A549 (cell line): ENCODE measurements at regions of chr20 and their contacts with region 1.

Region 1: DNA sequence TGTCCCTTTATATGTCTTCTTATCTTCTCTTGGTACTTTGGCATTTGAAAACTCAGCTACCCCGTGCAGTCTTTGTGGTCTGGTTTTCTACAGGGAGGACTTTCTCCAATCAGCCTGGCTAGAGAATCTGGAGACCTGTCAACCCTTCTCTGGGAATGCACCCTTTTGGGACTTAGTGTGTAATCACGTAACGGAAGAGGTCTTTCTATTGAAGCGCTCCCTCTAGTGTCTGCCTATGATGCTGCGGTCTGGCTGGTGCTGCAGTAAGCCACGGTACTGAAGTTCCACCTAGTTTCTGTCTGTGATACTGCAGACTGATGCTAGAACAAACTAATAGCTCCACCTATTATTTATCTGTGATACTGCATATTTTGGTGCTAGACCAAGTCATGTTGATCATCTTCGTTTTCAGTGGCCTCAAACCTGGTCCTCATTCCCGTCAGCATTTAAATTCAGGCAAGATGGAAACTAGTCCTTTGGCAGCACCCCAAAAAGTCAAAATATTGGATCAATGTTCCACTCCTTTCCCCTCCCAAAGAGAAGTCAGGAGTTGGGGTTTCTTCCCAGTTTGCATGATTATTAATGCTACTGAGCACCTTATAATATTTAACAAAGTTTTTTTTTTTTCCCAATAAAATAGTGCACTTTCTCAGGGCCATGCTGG is 12.5 kb upstream of the SIRPB2 start:
- DNase-seq: peak; percentile 95
- ATAC-seq: peak; percentile 98 to 100
- H3K4me3 ChIP-seq: no peak overlapping the region
- H3K27ac ChIP-seq: no peak overlapping the region
- H3K4me1 ChIP-seq: peaks cover 9% of the 10 kb centered on the region; the same call in 1 of the 3 replicates
- CTCF ChIP-seq: peak; percentile 100
- EP300 ChIP-seq: no peak
- POLR2A ChIP-seq: no peak
- RAD21 ChIP-seq: peak; percentile 98 to 99

Region 2: GRCh38 chr20:1313236-1313964 is 190.3 kb before region 1 on chr20:
- CTCF ChIA-PET with region 1: interaction called, 17 read pairs
- POLR2A ChIA-PET with region 1: no interaction called
- DNase-seq: peak; percentile 71 to 75
- ATAC-seq: peak; percentile 59 to 88; a peak in 4 of 6 replicates
- H3K4me3 ChIP-seq: no peak overlapping the region
- H3K27ac ChIP-seq: 0 out of 6 replicates have a peak overlapping the region, but pooled peaks of 1 of the 2 experiments have one; percentile 29
- H3K4me1 ChIP-seq: peaks cover 3% of the 10 kb centered on the region; the same call in 1 of the 3 replicates
- CTCF ChIP-seq: peak; percentile 83
- EP300 ChIP-seq: no peak
- POLR2A ChIP-seq: no peak
- RAD21 ChIP-seq: peak; percentile 79 to 86

Region 3: GRCh38 chr20:1370548-1371110 is 133.1 kb before region 1 on chr20:
- CTCF ChIA-PET with region 1: interaction called, 10 read pairs
- POLR2A ChIA-PET with region 1: no interaction called
- DNase-seq: no peak
- ATAC-seq: no peak
- H3K4me3 ChIP-seq: no peak overlapping the region
- H3K27ac ChIP-seq: no peak overlapping the region
- H3K4me1 ChIP-seq: peaks cover 14% of the 10 kb centered on the region
- CTCF ChIP-seq: no peak
- EP300 ChIP-seq: no peak
- POLR2A ChIP-seq: no peak
- RAD21 ChIP-seq: no peak

Region 4: DNA sequence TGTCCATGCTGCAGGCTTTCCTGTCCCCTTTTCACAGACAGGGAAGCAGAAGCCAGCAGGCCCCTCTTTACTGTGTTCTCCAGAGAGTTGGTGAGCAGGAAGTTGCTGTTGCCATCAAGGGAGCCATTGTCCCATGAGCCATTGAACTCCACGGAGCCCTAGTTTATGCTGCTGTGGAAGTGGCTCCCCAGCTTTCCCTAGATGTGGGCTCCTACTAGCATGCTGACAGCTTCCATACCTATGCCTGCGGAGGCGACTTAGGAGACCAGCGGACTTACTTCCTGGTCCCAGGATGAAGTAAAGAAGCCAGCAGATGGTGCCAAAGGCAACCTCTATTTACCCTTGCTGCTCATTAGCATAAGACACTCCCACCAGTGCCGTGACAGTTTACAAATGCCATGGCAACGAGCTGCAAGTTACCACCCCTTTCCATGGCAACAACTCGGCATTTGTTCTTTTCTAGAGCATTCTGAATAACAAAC is 80.0 kb before region 1 on chr20:
- CTCF ChIA-PET with region 1: interaction called, 16 read pairs
- POLR2A ChIA-PET with region 1: no interaction called
- DNase-seq: peak in 1 of 2 experiments; percentile 78
- ATAC-seq: peak in 1 of 2 experiments; percentile 78; a peak in 3 of 6 replicates
- H3K4me3 ChIP-seq: no peak overlapping the region
- H3K27ac ChIP-seq: no peak overlapping the region
- H3K4me1 ChIP-seq: no peaks in the 10 kb centered on the region
- CTCF ChIP-seq: 0 out of 3 replicates have a peak, but pooled peaks have one; percentile 11
- EP300 ChIP-seq: no peak
- POLR2A ChIP-seq: no peak
- RAD21 ChIP-seq: no peak

Region 5: GRCh38 chr20:1466211-1467081 is 37.2 kb before region 1 on chr20 and contains the start of gene NSFL1C:
- CTCF ChIA-PET with region 1: interaction called, 306 read pairs
- POLR2A ChIA-PET with region 1: interaction called, 7 read pairs
- DNase-seq: peak; percentile 96 to 97
- ATAC-seq: peak; percentile 80 to 93
- H3K4me3 ChIP-seq: peak within 1 kb of the TSS; percentile 97
- H3K27ac ChIP-seq: peak within 1 kb of the TSS; percentile 95 to 97
- H3K4me1 ChIP-seq: peaks cover 37% of the 10 kb centered on the region
- CTCF ChIP-seq: peak; percentile 97
- EP300 ChIP-seq: no peak
- POLR2A ChIP-seq: peak; percentile 85
- RAD21 ChIP-seq: peak in 1 of 2 experiments; percentile 69; a peak in 4 of 5 replicates
- polyA plus RNA-seq, gene NSFL1C: 53.2 and 56.6 TPM in 2 replicates

Region 6: GRCh38 chr20:1524004-1524403 is 20.3 kb after region 1 on chr20:
- CTCF ChIA-PET with region 1: interaction called, 18 read pairs
- POLR2A ChIA-PET with region 1: no interaction called
- DNase-seq: no peak
- ATAC-seq: no peak
- H3K4me3 ChIP-seq: no peak overlapping the region
- H3K27ac ChIP-seq: no peak overlapping the region
- H3K4me1 ChIP-seq: no peaks in the 10 kb centered on the region
- CTCF ChIP-seq: no peak
- EP300 ChIP-seq: no peak
- POLR2A ChIP-seq: no peak
- RAD21 ChIP-seq: no peak

Region 7: GRCh38 chr20:1588533-1589460 is 85.1 kb after region 1 on chr20:
- CTCF ChIA-PET with region 1: no interaction called
- POLR2A ChIA-PET with region 1: no interaction called
- DNase-seq: no peak
- ATAC-seq: no peak
- H3K4me3 ChIP-seq: no peak overlapping the region
- H3K27ac ChIP-seq: no peak overlapping the region
- H3K4me1 ChIP-seq: no peaks in the 10 kb centered on the region
- CTCF ChIP-seq: no peak
- EP300 ChIP-seq: no peak
- POLR2A ChIP-seq: no peak
- RAD21 ChIP-seq: no peak